ENCODE measurements at regions of chr1 and their contacts with region 1.

Region 1: DNA sequence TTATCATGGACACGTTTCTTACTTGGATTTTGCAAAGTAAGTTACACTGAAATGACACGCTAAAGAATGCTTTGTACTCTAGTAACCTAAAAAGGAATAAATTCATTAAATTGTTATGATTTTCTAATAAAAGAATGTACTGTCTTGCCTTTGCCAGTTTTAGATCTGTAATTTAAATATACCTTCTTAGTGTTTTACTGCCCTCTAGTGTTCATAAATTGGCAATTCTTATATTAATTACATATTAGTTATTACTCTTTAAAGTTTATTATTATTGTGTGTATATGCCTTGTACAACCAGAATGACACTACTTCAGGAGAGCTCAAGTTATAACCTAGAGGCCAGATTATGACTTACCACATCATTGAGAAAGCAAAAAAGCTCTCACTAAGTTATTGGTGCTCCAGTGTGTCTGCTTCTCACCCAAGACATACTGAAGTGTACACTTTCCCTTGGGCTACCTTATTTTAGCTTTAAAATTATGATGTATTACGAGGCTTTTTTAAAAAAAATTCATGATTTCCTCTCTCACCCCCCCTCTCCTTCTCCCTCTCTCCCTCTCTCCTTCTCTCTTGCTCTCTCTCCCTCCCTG is 169.9 kb downstream of the HS2ST1 start:
- DNase-seq: no peak
- ATAC-seq: peak; percentile 48
- H3K4me3 ChIP-seq: no peak overlapping the region
- H3K27ac ChIP-seq: no peak overlapping the region
- H3K4me1 ChIP-seq: no peaks in the 10 kb centered on the region
- H3K27me3 ChIP-seq: no peaks in the 10 kb centered on the region
- CTCF ChIP-seq: peak; percentile 34 to 85 (median 59)
- POLR2A ChIP-seq: no peak

Region 2: DNA sequence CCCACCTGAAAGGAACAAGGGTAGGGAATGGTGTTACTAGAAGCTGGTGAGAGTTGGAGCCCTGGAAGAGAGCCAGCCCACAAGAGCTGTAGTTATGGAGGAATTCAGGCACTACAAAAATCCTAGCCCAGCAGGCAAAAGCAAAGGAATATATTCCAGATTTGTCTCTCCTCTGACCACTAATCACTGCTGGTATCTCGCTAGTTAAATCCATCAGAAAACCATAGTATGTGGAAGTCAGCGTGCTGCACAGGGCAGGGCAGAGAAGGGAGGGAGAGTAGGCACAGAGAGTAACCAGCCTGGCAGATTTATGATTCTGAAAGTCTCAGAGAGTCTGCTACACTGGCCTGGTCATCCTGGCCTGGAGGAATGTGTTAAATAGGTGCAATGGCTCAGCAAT is 259.0 kb before region 1 on chr1:
- intact Hi-C with region 1: loop called (anchors 5 kb)
- DNase-seq: no peak
- ATAC-seq: no peak
- H3K4me3 ChIP-seq: no peak overlapping the region
- H3K27ac ChIP-seq: no peak overlapping the region
- H3K4me1 ChIP-seq: no peaks in the 10 kb centered on the region
- H3K27me3 ChIP-seq: no peaks in the 10 kb centered on the region
- CTCF ChIP-seq: no peak
- POLR2A ChIP-seq: no peak

Region 3: DNA sequence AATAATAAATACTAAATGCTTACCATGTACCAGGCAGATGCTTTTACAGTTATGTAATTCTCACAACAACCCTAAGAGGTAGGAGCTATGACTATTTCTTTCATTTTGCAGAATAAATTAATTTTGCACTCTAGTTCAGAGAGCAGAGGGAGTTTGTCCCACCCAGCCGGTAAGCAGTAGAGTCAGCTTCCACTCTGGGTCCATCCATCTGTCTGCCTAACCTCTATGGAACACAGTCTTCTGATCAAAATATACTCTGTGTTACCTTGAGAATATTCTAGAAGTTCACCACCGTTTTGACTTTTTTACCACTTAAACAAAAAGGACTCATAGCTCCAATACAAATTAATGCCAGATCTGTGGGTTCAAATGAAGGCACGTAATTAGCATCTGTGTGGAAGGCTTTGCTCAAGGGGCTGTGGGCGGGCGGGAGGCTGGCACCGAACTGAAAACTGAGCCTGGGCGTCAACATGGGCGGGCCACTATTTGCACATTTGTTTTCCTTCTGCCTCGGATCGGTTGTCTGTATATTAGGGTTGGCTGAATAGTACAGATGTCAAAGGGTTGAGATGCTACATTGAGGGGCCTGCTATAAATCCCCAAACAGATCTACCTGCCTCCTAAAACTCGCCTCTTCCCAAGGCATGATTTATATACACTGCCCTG is 211.2 kb after region 1 on chr1:
- intact Hi-C with region 1: no loop called
- DNase-seq: no peak
- ATAC-seq: no peak
- H3K4me3 ChIP-seq: no peak overlapping the region
- H3K27ac ChIP-seq: no peak overlapping the region
- H3K4me1 ChIP-seq: no peaks in the 10 kb centered on the region
- H3K27me3 ChIP-seq: no peaks in the 10 kb centered on the region
- CTCF ChIP-seq: no peak
- POLR2A ChIP-seq: no peak

Measured in body of pancreas (tissue), 4 donors.